ENCODE measurements at regions of chr12 and their contacts with region 1.

Region 1: GRCh38 chr12:10562306-10562933 is 51.0 kb downstream of the MAGOHB start:
- DNase-seq: peak; percentile 40
- CTCF ChIP-seq: peak; percentile 68

Region 2: GRCh38 chr12:10235761-10236631 is 326.4 kb before region 1 on chr12:
- in situ Hi-C with region 1: loop called (anchors 10 kb)
- DNase-seq: peak; percentile 59
- CTCF ChIP-seq: peak; percentile 75

Region 3: DNA sequence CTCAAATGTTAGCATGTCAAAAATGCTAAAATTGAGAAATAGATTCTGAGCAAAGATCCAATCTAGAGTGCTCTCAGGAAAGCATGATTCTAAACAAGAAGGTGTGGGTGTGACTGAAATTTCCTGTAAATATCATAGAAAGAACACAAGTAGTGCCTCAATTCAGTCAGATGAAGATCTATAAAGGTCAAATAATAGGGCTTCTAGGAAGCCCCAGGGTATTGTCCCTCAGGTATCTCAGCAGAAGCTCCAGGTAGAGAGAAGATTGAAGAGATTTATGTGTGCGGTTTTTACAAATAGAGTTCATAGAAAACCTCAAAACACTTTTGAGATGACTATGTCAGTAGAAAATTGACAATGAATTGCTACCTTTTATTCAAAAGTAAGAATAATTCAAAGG is 241.8 kb before region 1 on chr12:
- in situ Hi-C with region 1: loop called (anchors 10 kb)
- DNase-seq: peak; percentile 17
- CTCF ChIP-seq: no peak

Measured in GM13977 (cell line).